Calu3 (cell line): ENCODE measurements at regions of chr12 and their contacts with region 1.

Region 1: DNA sequence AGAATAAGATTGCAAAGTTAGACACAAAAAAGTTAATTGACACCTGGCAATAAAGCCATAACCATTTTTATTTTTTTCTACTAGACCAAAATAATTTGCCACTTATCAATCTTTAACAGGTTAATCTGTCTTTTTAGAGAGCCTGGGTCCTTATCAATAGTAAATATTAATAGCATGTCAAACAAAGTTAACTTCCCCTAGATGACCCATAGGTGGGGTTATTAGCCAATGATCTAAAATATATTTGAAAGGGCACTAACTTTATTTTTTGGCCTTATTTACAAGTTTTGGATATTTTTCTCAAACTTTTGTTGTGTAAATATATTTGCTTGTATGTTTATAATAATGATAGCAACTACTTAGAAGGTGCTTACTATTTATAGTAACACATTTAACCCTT is 3.9 kb downstream of the ANKRD33 start:
- DNase-seq: no peak
- H3K4me3 Mint-ChIP-seq: no peak overlapping the region
- H3K27ac Mint-ChIP-seq: no peak overlapping the region
- H3K4me1 Mint-ChIP-seq: no peaks in the 10 kb centered on the region
- H3K27me3 Mint-ChIP-seq: peaks cover 13% of the 10 kb centered on the region
- CTCF ChIP-seq: no peak

Region 2: GRCh38 chr12:51814311-51815088 is 77.3 kb before region 1 on chr12:
- CTCF ChIA-PET with region 1: no interaction called
- intact Hi-C with region 1: no loop called
- DNase-seq: peak; percentile 77
- H3K4me3 Mint-ChIP-seq: peak overlapping the region; percentile 51
- H3K27ac Mint-ChIP-seq: peak overlapping the region; percentile 55
- H3K4me1 Mint-ChIP-seq: peaks cover 8% of the 10 kb centered on the region
- H3K27me3 Mint-ChIP-seq: no peaks in the 10 kb centered on the region
- CTCF ChIP-seq: peak; percentile 62

Region 3: GRCh38 chr12:51863933-51864832 is 27.7 kb before region 1 on chr12:
- CTCF ChIA-PET with region 1: no interaction called
- intact Hi-C with region 1: no loop called
- DNase-seq: no peak
- H3K4me3 Mint-ChIP-seq: no peak overlapping the region
- H3K27ac Mint-ChIP-seq: no peak overlapping the region
- H3K4me1 Mint-ChIP-seq: no peaks in the 10 kb centered on the region
- H3K27me3 Mint-ChIP-seq: peaks cover 44% of the 10 kb centered on the region
- CTCF ChIP-seq: no peak

Region 4: GRCh38 chr12:51923501-51924271 is 31.8 kb after region 1 on chr12:
- CTCF ChIA-PET with region 1: no interaction called
- intact Hi-C with region 1: no loop called
- DNase-seq: peak; percentile 49
- H3K4me3 Mint-ChIP-seq: no peak overlapping the region
- H3K27ac Mint-ChIP-seq: no peak overlapping the region
- H3K4me1 Mint-ChIP-seq: no peaks in the 10 kb centered on the region
- H3K27me3 Mint-ChIP-seq: peaks cover 13% of the 10 kb centered on the region
- CTCF ChIP-seq: peak; percentile 52

Region 5: GRCh38 chr12:51951199-51951842 is 59.5 kb after region 1 on chr12 and contains the start of gene ACVR1B:
- CTCF ChIA-PET with region 1: no interaction called
- intact Hi-C with region 1: no loop called
- DNase-seq: peak; percentile 80
- H3K4me3 Mint-ChIP-seq: peak within 1 kb of the TSS; percentile 91
- H3K27ac Mint-ChIP-seq: peak within 1 kb of the TSS; percentile 78
- H3K4me1 Mint-ChIP-seq: peaks cover 35% of the 10 kb centered on the region
- H3K27me3 Mint-ChIP-seq: peaks cover 35% of the 10 kb centered on the region
- CTCF ChIP-seq: no peak
- total RNA-seq, gene ACVR1B: 16.3 and 17.3 TPM in 2 replicates

Region 6: DNA sequence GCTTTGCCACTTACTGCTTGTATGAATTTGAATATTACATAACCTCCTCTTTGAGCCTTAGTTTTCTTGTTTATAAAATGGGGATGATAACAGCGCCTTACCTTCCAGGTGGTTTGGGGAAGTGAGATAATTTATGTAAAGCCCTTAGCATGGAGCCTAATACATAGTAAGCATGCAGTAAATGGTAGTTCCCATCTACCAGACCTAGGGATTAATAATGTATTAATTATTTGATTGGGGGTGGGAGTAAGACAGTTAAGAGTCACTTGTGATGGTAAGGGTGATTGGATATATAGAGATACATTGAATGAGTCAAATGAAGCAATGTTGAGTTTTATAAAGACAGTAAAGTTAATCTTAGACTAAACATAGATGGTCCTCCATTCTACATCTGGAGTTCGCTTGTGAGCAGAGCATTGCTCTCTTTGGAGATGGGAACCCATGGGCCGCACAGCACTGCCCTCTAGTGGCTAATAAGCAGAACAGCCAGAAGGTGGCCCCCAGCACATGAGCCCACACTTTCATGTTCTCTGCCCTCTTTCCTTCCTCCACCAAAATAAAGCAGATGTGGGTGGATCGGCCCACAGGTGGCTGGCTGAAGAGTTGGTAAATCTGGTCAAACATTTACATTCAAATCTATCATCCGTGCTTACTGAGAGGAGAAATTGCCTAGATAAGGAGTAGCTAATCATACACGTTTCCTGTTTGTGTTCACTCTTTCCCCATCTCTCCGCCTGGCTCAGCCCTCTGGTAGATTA is 88.4 kb after region 1 on chr12:
- CTCF ChIA-PET with region 1: interaction called, 4 read pairs
- intact Hi-C with region 1: loop called (anchors 2 kb)
- DNase-seq: peak; percentile 56
- H3K4me3 Mint-ChIP-seq: no peak overlapping the region
- H3K27ac Mint-ChIP-seq: no peak overlapping the region
- H3K4me1 Mint-ChIP-seq: peaks cover 19% of the 10 kb centered on the region
- H3K27me3 Mint-ChIP-seq: no peaks in the 10 kb centered on the region
- CTCF ChIP-seq: peak; percentile 82